ENCODE measurements at regions of chr11 and their contacts with region 1.

Region 1: DNA sequence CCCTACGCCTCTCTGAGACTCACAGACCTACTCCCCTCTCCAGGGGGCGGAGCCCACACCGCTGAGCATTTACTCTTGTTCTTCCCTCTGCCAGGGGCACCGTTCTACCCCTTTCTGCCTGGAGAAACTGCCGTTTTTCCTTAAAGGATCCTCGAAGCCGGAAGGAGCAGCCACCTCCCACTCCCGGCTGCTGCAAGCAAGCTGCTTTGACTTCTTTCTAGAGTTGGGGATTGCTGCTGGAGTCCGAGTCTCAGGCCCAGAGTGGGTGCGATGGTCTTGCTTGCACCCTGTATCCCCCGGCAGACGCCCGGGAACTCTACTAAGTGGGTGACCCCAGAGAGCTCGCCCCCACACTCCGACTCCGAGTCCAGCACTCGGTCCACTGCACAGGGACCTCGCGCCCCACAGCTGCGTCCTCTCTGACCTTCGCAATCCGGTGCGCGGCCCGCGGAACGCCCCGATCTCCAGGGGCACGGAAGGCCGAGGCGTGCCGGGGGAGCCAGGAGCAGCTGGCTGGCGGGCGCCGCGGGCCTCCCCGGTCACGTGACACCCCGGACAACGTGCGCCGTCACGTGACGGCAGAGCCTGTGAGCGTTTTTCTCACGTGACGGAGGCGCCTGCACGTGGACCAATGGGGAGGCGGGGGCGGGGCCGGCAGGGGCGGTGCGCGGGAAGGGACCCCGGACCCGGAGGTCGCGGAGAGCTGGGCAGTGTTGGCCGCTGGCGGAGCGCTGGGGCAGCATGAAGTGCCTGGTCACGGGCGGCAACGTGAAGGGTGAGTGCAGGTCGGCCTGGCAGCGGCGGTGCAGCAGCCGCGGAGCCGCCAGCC is at the start of gene RAD9A:
- DNase-seq: peak; percentile 81 to 96 (median 89)
- ATAC-seq: peak; percentile 82 to 88 (median 83)
- H3K4me3 ChIP-seq: peak within 1 kb of the TSS; percentile 62 to 89
- H3K4me3 Mint-ChIP-seq: peak within 1 kb of the TSS; percentile 85 to 87 (median 85)
- H3K27ac ChIP-seq: peak within 1 kb of the TSS; percentile 67
- H3K27ac Mint-ChIP-seq: peak within 1 kb of the TSS; percentile 80 to 81
- H3K4me1 ChIP-seq: peaks cover 7 to 49% of the 10 kb centered on the region in 2 experiments
- H3K4me1 Mint-ChIP-seq: peaks cover 40 to 44% (median 41%) of the 10 kb centered on the region in 3 donors
- H3K27me3 ChIP-seq: no peaks in the 10 kb centered on the region
- H3K27me3 Mint-ChIP-seq: no peaks in the 10 kb centered on the region
- total RNA-seq, gene RAD9A: 34.9 to 63.8 (median 56.2) TPM

Region 2: DNA sequence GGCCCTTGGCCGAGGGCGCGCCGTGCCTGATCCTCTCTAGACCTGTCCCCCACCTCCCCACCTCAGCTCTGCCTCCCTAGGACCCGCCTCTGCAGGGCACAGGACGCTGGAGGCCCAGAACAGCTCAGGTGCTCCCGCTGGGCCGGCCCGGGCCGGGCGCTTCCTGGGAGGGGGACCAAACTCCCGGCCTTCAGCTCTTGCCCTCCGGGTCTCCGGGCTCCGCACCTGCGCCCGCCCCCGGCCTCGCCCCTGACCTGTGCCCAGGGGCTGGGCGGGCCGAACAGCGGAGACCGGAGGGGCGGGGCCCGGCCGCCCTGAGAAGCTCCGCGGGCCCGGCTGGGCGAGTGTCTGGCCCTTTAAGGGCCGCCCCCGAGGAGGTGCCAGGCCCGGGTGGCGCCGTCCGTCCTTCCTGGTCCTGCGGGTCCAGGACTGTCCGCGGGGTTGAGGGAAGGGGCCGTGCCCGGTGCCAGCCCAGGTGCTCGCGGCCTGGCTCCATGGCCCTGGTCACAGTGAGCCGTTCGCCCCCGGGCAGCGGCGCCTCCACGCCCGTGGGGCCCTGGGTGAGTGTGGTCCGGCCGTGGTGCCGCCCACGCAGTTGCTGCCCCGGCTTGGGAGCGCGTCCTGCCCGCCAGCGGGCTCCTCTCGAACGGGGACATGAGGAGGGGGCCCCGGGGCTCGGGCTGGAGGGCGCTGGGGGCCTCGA is 88.2 kb before region 1 on chr11 and contains the start of gene SSH3:
- CTCF ChIA-PET with region 1: no interaction called
- POLR2A ChIA-PET with region 1: no interaction called
- DNase-seq: peak in 7 of 35 experiments; percentile 7 to 51 (median 37)
- ATAC-seq: peak; percentile 75 to 79 (median 78)
- H3K4me3 ChIP-seq: peak within 1 kb of the TSS; percentile 48 to 61
- H3K4me3 Mint-ChIP-seq: peak within 1 kb of the TSS; percentile 61 to 73 (median 67)
- H3K27ac ChIP-seq: peak within 1 kb of the TSS; percentile 28
- H3K27ac Mint-ChIP-seq: peak within 1 kb of the TSS; percentile 39 to 80
- H3K4me1 ChIP-seq: peaks cover 0 to 31% of the 10 kb centered on the region in 2 experiments
- H3K4me1 Mint-ChIP-seq: peaks cover 6 to 27% (median 26%) of the 10 kb centered on the region in 3 donors
- H3K27me3 ChIP-seq: no peaks in the 10 kb centered on the region
- H3K27me3 Mint-ChIP-seq: no peaks in the 10 kb centered on the region
- total RNA-seq, gene SSH3: 11.5 to 30.9 (median 26.7) TPM

Region 3: GRCh38 chr11:67373925-67374618 is 17.4 kb before region 1 on chr11:
- CTCF ChIA-PET with region 1: interaction called in 1 of 2 experiments, 10 read pairs
- POLR2A ChIA-PET with region 1: no interaction called
- DNase-seq: peak in 19 of 35 experiments; percentile 20 to 66 (median 41)
- ATAC-seq: peak; percentile 34 to 46 (median 42)
- H3K4me3 ChIP-seq: peak overlapping the region; percentile 45 to 46
- H3K4me3 Mint-ChIP-seq: peak overlapping the region; percentile 76 to 89 (median 84)
- H3K27ac ChIP-seq: peak overlapping the region; percentile 20
- H3K27ac Mint-ChIP-seq: peak overlapping the region; percentile 63 to 68
- H3K4me1 ChIP-seq: peaks cover 8 to 62% of the 10 kb centered on the region in 2 experiments
- H3K4me1 Mint-ChIP-seq: peaks cover 41 to 48% (median 44%) of the 10 kb centered on the region in 3 donors
- H3K27me3 ChIP-seq: peaks cover 0 to 44% of the 10 kb centered on the region in 2 experiments
- H3K27me3 Mint-ChIP-seq: peaks cover 10 to 17% of the 10 kb centered on the region in 2 donors

Region 4: DNA sequence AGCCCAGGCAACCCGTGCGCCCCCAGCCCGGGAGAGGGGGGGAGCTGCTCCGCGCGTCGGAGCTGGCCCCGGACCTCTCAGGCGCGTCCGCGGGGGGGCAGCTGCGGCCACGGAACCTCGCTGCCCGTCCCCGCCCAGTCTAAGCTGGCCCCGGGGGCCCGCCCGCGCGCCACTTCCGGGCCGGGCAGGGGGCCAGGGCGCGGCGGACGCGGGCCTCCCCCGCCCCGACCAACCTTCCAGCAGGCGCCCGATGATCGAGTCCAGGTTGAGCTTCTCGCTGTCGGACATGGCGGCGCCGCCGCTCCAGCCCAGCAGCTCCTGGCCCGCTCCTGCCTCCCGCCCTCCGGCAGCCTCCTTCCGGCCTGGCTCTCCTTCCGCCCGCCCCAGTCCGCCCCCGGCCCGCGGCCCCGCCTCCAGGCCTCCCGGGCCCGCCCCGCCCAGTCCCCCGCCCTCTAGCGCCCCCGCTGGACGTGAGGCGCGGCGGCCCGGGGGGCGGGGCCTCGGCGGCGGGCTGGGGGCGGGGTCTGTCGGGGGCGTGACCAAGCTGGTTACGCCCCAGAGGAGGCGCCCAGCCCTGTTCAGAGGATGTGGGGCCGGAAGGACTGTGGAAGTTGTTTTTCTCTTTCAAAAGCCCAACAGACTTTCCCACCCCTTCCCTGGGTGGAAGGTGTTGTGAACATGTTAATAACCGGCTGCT is 10.1 kb after region 1 on chr11 and contains the start of gene PPP1CA:
- CTCF ChIA-PET with region 1: interaction called in 1 of 2 experiments, 9 read pairs
- POLR2A ChIA-PET with region 1: interaction called in 1 of 2 experiments, 10 read pairs
- DNase-seq: peak; percentile 78 to 96 (median 90)
- ATAC-seq: peak; percentile 67 to 75 (median 72)
- H3K4me3 ChIP-seq: peak within 1 kb of the TSS; percentile 81 to 97
- H3K4me3 Mint-ChIP-seq: peak within 1 kb of the TSS; percentile 88 to 97 (median 96)
- H3K27ac ChIP-seq: peak within 1 kb of the TSS; percentile 74
- H3K27ac Mint-ChIP-seq: peak within 1 kb of the TSS; percentile 96
- H3K4me1 ChIP-seq: peaks cover 30 to 88% of the 10 kb centered on the region in 2 experiments
- H3K4me1 Mint-ChIP-seq: peaks cover 63 to 76% (median 66%) of the 10 kb centered on the region in 3 donors
- H3K27me3 ChIP-seq: no peaks in the 10 kb centered on the region
- H3K27me3 Mint-ChIP-seq: no peaks in the 10 kb centered on the region
- total RNA-seq, gene PPP1CA: 118 to 198 (median 186) TPM

Region 5: DNA sequence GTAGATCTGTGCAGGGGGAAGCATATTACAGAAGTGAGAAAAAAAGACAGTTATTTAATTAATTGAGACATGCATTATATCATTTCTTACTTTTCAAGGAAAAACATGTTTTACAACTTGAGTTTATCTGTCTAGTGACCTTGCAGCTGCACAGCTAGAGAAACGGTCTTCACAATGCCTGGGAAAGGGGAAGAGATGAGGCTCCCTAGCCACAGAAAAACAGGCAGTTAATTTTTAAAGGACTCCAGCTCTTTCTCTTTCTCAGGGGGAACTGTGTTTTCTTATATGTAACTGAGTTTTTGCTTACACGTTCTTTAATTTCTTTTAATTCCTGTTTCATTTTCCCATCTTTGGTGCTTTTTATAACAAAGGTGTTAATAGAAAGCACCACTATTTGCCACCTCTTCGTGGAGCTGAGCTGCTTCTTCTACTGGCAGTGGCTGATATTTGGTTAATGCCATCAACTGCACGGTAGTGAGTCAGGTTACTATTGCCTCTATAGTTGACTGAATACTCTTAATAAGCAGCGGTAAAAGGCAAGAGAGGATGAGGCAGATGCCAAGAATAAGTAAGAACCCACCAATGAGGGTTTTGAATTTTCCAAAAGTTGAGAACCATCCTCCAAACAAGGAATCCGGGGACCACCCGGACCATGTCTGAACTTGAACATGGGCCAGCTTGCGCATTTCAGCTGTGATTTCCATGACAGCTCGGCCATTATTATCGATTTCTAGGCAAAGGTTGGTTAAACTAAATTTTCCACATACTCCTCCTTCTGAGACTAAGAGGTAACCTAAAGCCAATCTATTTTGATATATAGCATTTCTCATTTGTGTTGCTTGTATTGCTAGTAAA is 294.4 kb after region 1 on chr11:
- CTCF ChIA-PET with region 1: no interaction called
- POLR2A ChIA-PET with region 1: no interaction called
- DNase-seq: no peak
- ATAC-seq: no peak
- H3K4me3 ChIP-seq: no peak overlapping the region
- H3K4me3 Mint-ChIP-seq: no peak overlapping the region
- H3K27ac ChIP-seq: no peak overlapping the region
- H3K27ac Mint-ChIP-seq: no peak overlapping the region
- H3K4me1 ChIP-seq: no peaks in the 10 kb centered on the region
- H3K4me1 Mint-ChIP-seq: no peaks in the 10 kb centered on the region
- H3K27me3 ChIP-seq: peaks cover 0 to 20% of the 10 kb centered on the region in 2 experiments
- H3K27me3 Mint-ChIP-seq: peaks cover 16 to 23% of the 10 kb centered on the region in 2 donors